Head of caudate nucleus (tissue), 42 donors: ENCODE measurements at regions of chr1 and their contacts with region 1.

Region 1: GRCh38 chr1:65992165-65992840 is 199.6 kb downstream of the PDE4B start:
- DNase-seq: peak; percentile 24 to 90 (median 74)

Region 2: DNA sequence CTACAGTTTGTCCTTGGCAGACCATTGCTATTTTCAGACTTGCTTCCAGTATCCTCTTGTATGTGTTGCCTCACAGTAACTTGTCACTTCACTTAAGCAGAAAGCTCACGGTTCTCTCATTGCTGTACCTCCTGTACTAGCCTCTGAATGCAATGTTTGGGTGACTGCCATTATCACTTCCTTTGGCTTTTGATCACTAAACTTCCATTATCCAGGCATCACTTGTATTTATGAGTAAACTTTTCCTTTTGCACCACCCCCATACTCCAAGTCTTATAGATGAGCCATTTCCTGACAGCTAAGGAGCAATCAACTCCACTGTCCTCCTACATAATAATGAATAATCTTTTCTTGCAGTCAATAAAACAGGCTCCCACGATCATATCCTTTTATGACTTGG is 55.7 kb after region 1 on chr1:
- intact Hi-C with region 1: loop called (anchors 10 kb)
- DNase-seq: no peak

Region 3: GRCh38 chr1:66140072-66140471 is 147.8 kb after region 1 on chr1:
- intact Hi-C with region 1: loop called (anchors 10 kb)
- DNase-seq: peak in 1 of 42 donors; percentile 19

Region 4: DNA sequence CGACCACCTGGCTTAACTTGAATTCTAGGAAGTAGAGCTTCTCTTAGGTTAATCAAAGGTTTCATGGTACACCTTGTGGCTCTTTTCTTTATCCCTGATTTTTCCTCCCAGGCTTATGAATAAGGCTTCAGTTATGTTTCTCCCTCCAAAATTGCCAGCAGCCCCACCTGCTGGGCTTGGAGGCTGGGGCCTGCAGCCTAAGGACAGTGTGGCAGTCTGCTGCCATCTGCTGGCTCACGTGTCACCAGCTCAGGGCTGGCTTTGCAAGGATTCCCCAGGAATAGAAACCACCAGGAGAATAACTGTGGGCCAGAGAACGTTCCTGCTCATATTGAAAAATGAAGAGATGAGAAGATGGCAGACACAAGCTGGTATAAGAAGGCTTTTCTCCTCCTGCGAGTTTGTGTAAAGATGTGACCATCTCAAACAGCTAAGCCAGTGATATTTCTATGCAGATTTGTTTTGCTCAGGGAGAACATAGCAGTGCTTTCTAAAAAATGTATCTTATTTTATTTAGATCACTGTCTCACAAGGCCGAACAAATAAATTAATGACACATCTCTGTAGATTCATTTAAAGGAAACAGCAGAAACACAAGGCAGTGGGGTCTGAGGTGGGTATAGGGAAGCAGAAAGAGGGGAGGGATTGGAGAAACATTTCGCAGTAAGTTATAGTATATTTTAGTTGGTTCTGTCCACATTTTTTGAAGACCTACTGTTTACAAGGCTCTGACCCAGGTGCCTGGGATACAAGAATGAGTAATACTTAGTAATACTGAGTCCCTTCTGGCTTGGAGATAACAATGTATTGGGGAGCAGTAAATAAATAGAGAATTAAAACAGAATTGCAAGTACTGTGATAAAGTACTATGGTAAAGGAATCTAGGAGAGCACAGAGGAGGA is 250.6 kb after region 1 on chr1:
- intact Hi-C with region 1: loop called (anchors 10 kb)
- DNase-seq: peak; percentile 83 to 97 (median 92)